A549 (cell line): ENCODE measurements at regions of chr19 and their contacts with region 1.

Region 1: GRCh38 chr19:36528194-36528920 is at the start of gene ZNF260:
- DNase-seq: peak; percentile 97 to 99
- ATAC-seq: peak; percentile 96 to 97
- H3K4me3 ChIP-seq: peak within 1 kb of the TSS; percentile 62
- H3K27ac ChIP-seq: peak within 1 kb of the TSS; percentile 84 to 87
- H3K4me1 ChIP-seq: no peaks in the 10 kb centered on the region
- CTCF ChIP-seq: no peak
- EP300 ChIP-seq: no peak
- POLR2A ChIP-seq: peak; percentile 86
- RAD21 ChIP-seq: no peak
- polyA plus RNA-seq, gene ZNF260: 19.3 and 25.6 TPM in 2 replicates

Region 2: DNA sequence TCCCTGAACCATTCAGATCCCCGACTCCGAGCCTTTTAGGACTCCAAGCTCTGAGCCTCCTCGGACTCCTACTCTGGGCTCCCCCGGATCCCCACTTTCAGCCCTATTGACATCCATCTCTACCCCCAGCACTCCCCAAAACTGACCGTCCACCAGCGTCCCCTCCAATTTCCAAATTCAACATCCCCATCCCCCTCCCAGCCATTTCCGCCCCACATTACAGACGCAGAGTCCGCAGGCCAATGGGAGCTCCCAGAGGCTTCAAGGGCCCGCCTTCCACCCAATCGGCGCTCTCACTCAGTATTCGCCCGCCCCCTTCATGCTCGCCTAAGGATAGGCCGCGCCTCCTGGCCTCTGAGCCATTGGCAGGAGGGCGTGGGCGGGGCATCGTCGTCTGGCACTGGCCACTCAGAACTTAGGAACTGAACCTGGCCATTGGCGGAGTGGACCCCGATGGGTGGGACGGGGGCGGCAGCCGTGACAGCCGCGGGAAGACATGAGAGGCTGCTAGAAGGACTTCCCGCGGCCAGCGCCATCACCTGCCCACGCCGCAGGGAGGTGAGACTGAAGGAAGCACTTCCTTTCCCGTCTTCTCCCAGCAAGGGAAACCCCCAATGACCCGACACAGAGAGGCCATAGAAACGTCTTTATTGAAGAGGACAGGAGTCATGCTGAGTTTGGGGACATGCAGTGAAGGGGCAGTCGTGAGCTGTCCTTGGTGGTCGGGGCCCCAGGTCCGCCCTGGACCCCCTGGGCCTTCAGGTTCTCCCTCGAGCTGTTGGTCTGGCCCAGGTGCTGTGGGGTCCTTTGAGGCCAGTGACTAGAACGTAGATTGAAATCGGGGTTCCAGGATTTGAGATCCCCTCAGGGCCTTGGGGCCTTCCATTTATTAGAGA is 514.1 kb before region 1 on chr19 and contains the start of gene ALKBH6:
- CTCF ChIA-PET with region 1: no interaction called
- POLR2A ChIA-PET with region 1: no interaction called
- DNase-seq: peak; percentile 100
- ATAC-seq: peak; percentile 88 to 98
- H3K4me3 ChIP-seq: peak within 1 kb of the TSS; percentile 65
- H3K27ac ChIP-seq: peak within 1 kb of the TSS; percentile 81 to 85
- H3K4me1 ChIP-seq: peaks cover 19% of the 10 kb centered on the region
- CTCF ChIP-seq: no peak
- EP300 ChIP-seq: no peak
- POLR2A ChIP-seq: peak; percentile 80
- RAD21 ChIP-seq: 0 out of 5 replicates have a peak, but pooled peaks of 1 of the 2 experiments have one; percentile 23
- polyA plus RNA-seq, gene ALKBH6: 27.5 and 34.2 TPM in 2 replicates

Region 3: GRCh38 chr19:36214386-36215275 is 313.7 kb before region 1 on chr19 and contains the starts of genes ZNF146 and ZNF565:
- CTCF ChIA-PET with region 1: no interaction called
- POLR2A ChIA-PET with region 1: interaction called, 15 read pairs
- DNase-seq: peak; percentile 100
- ATAC-seq: peak; percentile 95 to 96
- H3K4me3 ChIP-seq: peak within 1 kb of the TSS; percentile 63
- H3K27ac ChIP-seq: peak within 1 kb of the TSS; percentile 87 to 91
- H3K4me1 ChIP-seq: 0 out of 3 replicates have a peak, but pooled peaks cover 3% of the 10 kb centered on the region
- CTCF ChIP-seq: no peak
- EP300 ChIP-seq: no peak
- POLR2A ChIP-seq: peak; percentile 97
- RAD21 ChIP-seq: no peak
- polyA plus RNA-seq, gene ZNF146: 293 and 362 TPM in 2 replicates
- polyA plus RNA-seq, gene ZNF565: 5.6 and 6.8 TPM in 2 replicates

Region 4: DNA sequence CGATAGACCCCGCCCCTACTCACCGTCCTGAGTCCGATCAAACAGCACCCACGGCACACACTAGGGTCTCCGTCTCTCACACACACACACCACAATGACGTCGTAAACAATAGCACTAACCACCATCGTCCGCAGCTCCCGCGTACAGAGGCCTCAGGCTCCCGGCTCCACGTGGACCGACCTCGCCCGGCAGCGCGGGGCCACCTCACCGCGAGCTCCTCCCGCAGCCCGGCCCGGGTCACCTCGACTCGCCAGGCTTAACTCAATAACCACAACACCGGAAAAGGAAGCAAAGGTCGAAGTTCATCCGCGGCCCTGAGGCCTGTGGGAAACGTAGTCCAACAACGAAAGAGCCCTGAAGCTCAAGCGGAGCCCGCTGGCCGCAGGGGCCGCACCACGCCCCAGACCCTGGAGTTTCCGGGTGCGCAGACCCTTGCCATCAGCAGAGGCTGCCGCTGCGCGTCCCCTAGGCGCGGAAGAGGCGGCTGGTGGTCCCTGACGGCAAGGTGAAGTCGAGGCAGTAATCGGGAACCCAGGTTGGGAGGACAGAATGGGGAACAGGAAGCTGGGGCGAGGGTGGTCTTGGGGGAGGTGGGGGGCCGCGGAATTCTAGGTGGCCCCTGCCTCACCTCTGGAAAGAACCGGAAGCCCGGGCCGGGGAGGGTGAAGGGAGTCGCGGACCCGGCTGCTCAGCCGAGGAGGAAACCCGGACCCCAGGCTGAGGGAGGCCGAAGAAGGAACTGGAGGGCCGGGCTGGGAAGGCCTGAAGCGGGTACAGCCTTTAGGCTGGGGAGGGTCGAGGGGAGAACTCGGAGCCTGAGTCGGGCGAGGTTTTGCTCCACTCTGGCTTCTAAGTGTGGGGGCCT is 44.9 kb after region 1 on chr19 and contains the start of gene ZNF529:
- CTCF ChIA-PET with region 1: interaction called, 3 read pairs
- POLR2A ChIA-PET with region 1: interaction called, 21 read pairs
- DNase-seq: peak; percentile 93 to 97
- ATAC-seq: peak; percentile 99
- H3K4me3 ChIP-seq: peak within 1 kb of the TSS; percentile 71
- H3K27ac ChIP-seq: peak within 1 kb of the TSS; percentile 72 to 86
- H3K4me1 ChIP-seq: no peaks in the 10 kb centered on the region
- CTCF ChIP-seq: no peak
- EP300 ChIP-seq: no peak
- POLR2A ChIP-seq: peak; percentile 60
- RAD21 ChIP-seq: no peak
- polyA plus RNA-seq, gene ZNF529: 6.0 and 7.0 TPM in 2 replicates